H1 (cell line): ENCODE measurements at regions of chr19 and their contacts with region 1.

Region 1: GRCh38 chr19:3304871-3305423 is 61.4 kb upstream of the NFIC start:
- DNase-seq: peak in 1 of 2 experiments; percentile 92
- H3K4me3 ChIP-seq: no peak overlapping the region
- H3K27ac ChIP-seq: no peak overlapping the region
- H3K4me1 ChIP-seq: no peaks in the 10 kb centered on the region
- H3K27me3 ChIP-seq: peaks cover 0 to 8% (median 4%) of the 10 kb centered on the region in 4 experiments; a peak in 4 of 7 replicates
- CTCF ChIP-seq: peak; percentile 66 to 76 (median 71)
- EP300 ChIP-seq: no peak
- POLR2A ChIP-seq: no peak
- RAD21 ChIP-seq: peak; percentile 74 to 79

Region 2: DNA sequence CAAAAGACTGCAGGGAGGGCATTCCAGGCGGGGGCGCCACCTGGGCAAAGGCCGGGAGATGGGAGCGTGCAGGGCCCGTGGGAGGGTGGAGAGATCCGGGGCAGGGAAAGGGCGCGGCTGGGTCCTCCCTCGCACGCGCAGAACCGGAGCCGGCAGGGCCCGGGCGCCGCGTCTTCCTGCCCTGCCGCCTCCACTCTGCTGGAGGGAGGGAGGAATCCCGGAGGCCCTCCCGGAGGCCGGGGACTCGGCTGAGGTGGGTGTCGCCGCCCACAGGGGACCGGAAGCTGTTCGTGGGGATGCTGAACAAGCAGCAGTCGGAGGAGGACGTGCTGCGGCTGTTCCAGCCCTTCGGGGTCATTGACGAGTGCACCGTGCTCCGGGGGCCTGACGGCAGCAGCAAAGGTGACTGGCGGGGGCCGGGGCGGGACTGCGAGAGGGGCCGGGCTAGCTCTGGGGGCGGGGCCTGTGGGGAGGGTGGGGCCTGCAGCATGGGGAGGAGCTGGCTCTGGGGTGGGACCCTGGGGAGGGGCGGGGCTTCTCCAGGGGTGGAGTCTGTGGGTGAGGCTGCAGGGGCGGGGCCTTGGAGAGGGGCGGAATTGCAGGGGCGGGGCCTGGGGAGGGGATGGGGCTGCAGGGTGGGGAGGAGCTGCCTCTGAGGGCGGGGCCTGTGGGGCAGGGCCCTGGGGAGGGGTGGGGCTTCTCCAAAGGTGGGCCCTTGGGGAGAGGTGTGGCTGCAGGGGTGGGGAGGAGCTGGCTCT is 29.2 kb before region 1 on chr19:
- CTCF ChIA-PET with region 1: interaction called, 20 read pairs
- POLR2A ChIA-PET with region 1: no interaction called
- DNase-seq: peak; percentile 93 to 97
- H3K4me3 ChIP-seq: peak overlapping the region; percentile 41 to 84 (median 52)
- H3K27ac ChIP-seq: no peak overlapping the region
- H3K4me1 ChIP-seq: peaks cover 2 to 10% (median 5%) of the 10 kb centered on the region in 4 experiments; a peak in 6 of 7 replicates
- H3K27me3 ChIP-seq: no peaks in the 10 kb centered on the region; a peak in 2 of 7 replicates
- CTCF ChIP-seq: peak in 1 of 3 experiments; percentile 88; a peak in 1 of 4 replicates
- EP300 ChIP-seq: no peak
- POLR2A ChIP-seq: no peak
- RAD21 ChIP-seq: no peak

Region 3: GRCh38 chr19:3324321-3324856 is 19.4 kb after region 1 on chr19:
- CTCF ChIA-PET with region 1: interaction called, 48 read pairs
- POLR2A ChIA-PET with region 1: interaction called, 3 read pairs
- DNase-seq: peak in 1 of 2 experiments; percentile 94
- H3K4me3 ChIP-seq: no peak overlapping the region
- H3K27ac ChIP-seq: no peak overlapping the region
- H3K4me1 ChIP-seq: no peaks in the 10 kb centered on the region
- H3K27me3 ChIP-seq: no peaks in the 10 kb centered on the region; a peak in 1 of 7 replicates
- CTCF ChIP-seq: peak; percentile 76 to 93 (median 92)
- EP300 ChIP-seq: no peak
- POLR2A ChIP-seq: no peak
- RAD21 ChIP-seq: peak; percentile 24 to 54; a peak in 3 of 4 replicates

Region 4: GRCh38 chr19:3336680-3337523 is 32.0 kb after region 1 on chr19:
- CTCF ChIA-PET with region 1: interaction called, 21 read pairs
- POLR2A ChIA-PET with region 1: no interaction called
- DNase-seq: no peak
- H3K4me3 ChIP-seq: no peak overlapping the region
- H3K27ac ChIP-seq: no peak overlapping the region
- H3K4me1 ChIP-seq: no peaks in the 10 kb centered on the region
- H3K27me3 ChIP-seq: peaks cover 0 to 6% (median 1%) of the 10 kb centered on the region in 4 experiments; a peak in 1 of 7 replicates
- CTCF ChIP-seq: no peak
- EP300 ChIP-seq: no peak
- POLR2A ChIP-seq: no peak
- RAD21 ChIP-seq: no peak

Region 5: DNA sequence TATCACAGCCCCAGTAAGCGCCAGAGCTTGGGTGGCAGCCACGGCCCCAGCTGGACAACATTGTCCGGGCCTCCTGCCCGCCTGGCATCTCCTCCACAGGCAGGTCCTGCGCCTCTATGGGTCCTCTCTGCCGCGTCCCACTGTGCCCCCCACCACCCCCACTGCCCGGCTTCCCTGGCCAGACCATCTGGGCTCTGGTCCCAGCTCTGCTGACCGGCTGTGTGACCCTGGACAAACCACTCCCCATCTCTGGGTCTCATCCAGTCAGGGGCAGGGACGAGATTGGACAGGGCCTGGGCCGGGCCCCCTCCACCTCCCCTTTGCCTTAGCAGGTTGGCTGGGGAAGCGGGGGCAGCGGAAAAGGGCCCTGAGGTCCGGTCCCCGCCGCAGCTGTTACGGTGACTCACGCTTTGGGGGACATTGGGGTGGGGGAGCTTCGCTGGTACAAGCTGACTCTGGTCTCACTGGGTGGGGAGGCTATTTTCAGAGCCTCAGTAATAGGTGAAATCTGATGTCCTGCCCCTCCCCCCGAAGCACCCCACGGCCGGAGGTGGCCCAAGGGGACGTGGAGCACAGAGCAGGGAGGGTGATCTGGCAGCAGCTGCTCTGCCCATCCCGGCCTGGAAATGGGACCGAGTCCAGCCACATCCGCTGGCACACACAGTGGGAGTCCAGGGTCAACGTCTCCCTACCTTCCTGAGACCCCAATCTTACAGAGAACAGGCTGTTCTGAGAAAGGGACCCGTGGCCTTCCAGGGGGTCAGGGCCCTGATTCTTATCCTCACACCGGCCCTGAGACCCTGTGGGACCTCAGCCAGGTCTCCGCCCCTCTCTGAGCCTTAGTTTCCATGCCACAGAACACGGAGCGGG is 70.5 kb after region 1 on chr19:
- CTCF ChIA-PET with region 1: no interaction called
- POLR2A ChIA-PET with region 1: no interaction called
- DNase-seq: no peak
- H3K4me3 ChIP-seq: no peak overlapping the region
- H3K27ac ChIP-seq: no peak overlapping the region
- H3K4me1 ChIP-seq: peaks cover 0 to 9% (median 6%) of the 10 kb centered on the region in 4 experiments; a peak in 5 of 7 replicates
- H3K27me3 ChIP-seq: peaks cover 18 to 47% (median 37%) of the 10 kb centered on the region in 4 experiments
- CTCF ChIP-seq: no peak
- EP300 ChIP-seq: no peak
- POLR2A ChIP-seq: no peak
- RAD21 ChIP-seq: no peak

Region 6: GRCh38 chr19:3479177-3479833 is 174.4 kb after region 1 on chr19:
- CTCF ChIA-PET with region 1: interaction called, 12 read pairs
- POLR2A ChIA-PET with region 1: interaction called, 3 read pairs
- DNase-seq: peak in 1 of 2 experiments; percentile 69
- H3K4me3 ChIP-seq: peak overlapping the region in 2 of 4 experiments; percentile 12 to 48; a peak in 3 of 8 replicates
- H3K27ac ChIP-seq: no peak overlapping the region
- H3K4me1 ChIP-seq: peaks cover 0 to 7% (median 5%) of the 10 kb centered on the region in 4 experiments; a peak in 6 of 7 replicates
- H3K27me3 ChIP-seq: peaks cover 0 to 7% (median 2%) of the 10 kb centered on the region in 4 experiments; a peak in 3 of 7 replicates
- CTCF ChIP-seq: no peak
- EP300 ChIP-seq: no peak
- POLR2A ChIP-seq: no peak
- RAD21 ChIP-seq: no peak